ENCODE measurements at regions of chr11 and their contacts with region 1.

Region 1: DNA sequence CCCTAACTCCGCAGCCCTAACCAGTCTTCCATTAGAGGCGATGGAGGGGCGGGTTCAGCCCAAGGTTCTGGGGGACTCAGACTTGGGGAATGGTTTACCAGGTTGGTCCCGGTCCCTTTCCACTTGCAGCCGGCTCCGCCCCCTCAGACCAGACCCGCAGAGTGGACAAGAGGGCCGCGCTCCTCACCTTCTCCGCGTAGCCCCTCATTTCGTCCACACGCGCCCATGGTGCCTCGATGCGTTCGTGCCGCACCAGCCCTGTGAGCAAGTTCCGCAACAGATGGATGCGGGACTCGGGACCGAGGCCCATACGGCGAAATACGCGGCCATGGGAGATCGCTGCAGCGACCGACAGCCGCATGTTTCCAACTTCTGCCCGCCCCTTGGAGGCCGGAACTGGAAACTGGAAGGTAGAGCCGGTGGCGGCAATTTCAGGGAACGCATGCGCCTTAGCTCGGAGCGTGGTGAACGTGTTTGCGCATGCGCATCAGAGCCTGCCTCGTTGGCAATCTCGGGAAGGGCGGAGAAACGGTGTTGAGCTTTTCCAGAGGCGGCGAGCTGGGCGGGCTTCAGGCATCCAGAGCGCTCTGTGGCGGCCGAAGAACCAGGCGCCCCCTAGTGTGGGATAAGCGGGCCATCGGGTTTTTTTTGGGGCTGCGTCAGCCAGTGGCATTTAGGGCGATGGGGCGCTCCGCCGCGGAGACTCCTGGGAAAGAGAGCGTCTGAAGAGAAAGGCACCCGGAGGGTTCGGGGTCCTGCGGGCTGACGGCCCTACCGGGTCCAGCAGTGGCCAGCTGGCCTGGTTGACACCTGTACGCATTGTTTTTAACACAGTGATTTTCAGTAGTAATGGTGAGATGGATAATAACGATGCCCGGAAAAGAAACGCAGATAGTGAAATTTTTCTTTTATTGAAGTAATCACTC is at the start of gene MRPL17:
- DNase-seq: peak; percentile 92 to 100 (median 99)
- ATAC-seq: peak; percentile 96
- H3K4me3 Mint-ChIP-seq: peak within 1 kb of the TSS; percentile 96 to 100 (median 99)
- H3K27ac Mint-ChIP-seq: peak within 1 kb of the TSS; percentile 97 to 100 (median 99)
- H3K4me1 Mint-ChIP-seq: peaks cover 23 to 49% (median 37%) of the 10 kb centered on the region in 4 donors
- H3K27me3 Mint-ChIP-seq: peaks cover 0 to 2% (median 0%) of the 10 kb centered on the region in 5 donors
- polyA plus RNA-seq, gene MRPL17: 16.2 to 23.6 (median 16.5) TPM

Region 2: DNA sequence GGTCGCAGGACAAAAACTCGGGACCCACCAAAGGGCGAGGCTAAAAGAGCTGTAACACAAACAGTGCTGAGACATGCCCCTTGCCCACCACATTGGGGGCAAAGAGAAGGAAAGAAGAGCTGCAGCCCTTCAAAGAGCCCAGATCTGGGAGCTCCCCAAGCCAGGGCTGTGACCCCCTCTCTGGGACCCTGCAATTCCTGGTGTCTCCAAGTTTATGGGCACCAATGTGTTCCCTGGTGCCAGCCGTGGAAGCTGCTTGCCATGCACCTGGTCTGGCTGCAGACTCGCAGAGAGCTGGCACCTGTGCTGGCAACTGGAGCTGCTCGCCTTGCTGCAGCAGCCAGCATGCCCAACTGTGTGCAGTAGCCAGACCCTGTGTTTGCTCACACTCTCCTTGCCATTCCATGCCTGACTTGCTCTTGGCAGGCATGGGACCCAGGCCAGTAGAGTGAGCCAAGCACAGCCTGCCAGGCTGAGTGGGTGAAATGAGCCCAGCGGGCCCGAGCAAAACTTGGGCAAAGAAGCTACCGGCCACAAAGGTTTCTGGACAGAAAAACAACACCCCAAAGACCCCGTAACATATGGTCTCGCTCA is 95.7 kb before region 1 on chr11:
- POLR2A ChIA-PET with region 1: no interaction called
- DNase-seq: no peak
- ATAC-seq: no peak
- H3K4me3 Mint-ChIP-seq: no peak overlapping the region
- H3K27ac Mint-ChIP-seq: peak overlapping the region in 1 of 10 donors; percentile 43
- H3K4me1 Mint-ChIP-seq: peaks cover 0 to 5% (median 2%) of the 10 kb centered on the region in 4 donors
- H3K27me3 Mint-ChIP-seq: no peaks in the 10 kb centered on the region

Region 3: DNA sequence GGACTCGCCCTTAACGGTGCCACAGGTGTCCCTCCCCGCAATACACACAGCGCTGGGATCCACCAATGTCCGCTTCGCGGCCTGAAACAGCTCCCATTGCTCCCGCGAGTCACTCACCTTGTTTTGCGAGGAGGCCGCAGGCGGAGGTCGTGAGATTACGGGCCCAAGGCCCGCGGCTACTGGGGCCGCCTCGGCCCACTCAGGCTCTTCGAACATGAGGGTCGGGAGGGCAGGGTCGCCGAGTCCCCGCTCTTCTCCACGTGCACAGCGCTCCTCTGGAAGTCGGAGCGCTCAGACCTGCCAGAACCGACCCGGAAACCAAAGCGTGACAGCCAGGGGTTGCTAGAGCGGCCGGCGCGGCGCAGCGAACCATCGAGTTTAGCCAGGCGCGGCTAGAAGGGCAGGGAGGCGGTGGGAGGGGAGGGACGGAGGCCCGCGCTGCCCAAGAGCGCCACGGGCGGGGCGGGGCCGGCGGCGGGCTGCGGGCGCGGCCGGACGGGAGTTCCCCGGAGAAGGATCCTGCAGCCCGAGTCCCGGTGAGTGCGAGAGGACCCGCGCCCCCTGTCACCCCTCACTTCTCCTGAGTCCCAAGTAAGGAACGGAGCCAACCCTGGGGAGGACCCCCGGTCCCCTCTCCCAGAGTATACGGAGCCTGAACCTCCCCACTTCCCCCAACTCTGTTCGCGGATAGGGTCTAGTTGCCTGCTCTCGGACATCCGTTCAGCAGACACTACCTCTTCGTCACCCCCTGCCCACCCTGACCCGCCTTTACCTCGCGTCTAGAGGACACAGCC is 79.7 kb before region 1 on chr11 and contains the starts of genes ILK and RRP8:
- POLR2A ChIA-PET with region 1: interaction called, 108 read pairs
- DNase-seq: peak; percentile 68 to 92 (median 80)
- ATAC-seq: peak; percentile 80 to 85
- H3K4me3 Mint-ChIP-seq: no peak within 1 kb of the TSS
- H3K27ac Mint-ChIP-seq: no peak within 1 kb of the TSS
- H3K4me1 Mint-ChIP-seq: peaks cover 16 to 33% (median 29%) of the 10 kb centered on the region in 4 donors
- H3K27me3 Mint-ChIP-seq: no peaks in the 10 kb centered on the region
- polyA plus RNA-seq, gene ILK: 63.7 to 72.5 (median 68.5) TPM
- polyA plus RNA-seq, gene RRP8: 17.8 to 25.9 (median 20.9) TPM

Region 4: GRCh38 chr11:6646918-6647679 is 36.1 kb before region 1 on chr11:
- POLR2A ChIA-PET with region 1: interaction called, 15 read pairs
- DNase-seq: peak in 7 of 10 donors; percentile 18 to 45 (median 37)
- ATAC-seq: peak; percentile 73 to 78
- H3K4me3 Mint-ChIP-seq: no peak overlapping the region
- H3K27ac Mint-ChIP-seq: no peak overlapping the region
- H3K4me1 Mint-ChIP-seq: peaks cover 0 to 12% (median 0%) of the 10 kb centered on the region in 4 donors
- H3K27me3 Mint-ChIP-seq: no peaks in the 10 kb centered on the region

Region 5: DNA sequence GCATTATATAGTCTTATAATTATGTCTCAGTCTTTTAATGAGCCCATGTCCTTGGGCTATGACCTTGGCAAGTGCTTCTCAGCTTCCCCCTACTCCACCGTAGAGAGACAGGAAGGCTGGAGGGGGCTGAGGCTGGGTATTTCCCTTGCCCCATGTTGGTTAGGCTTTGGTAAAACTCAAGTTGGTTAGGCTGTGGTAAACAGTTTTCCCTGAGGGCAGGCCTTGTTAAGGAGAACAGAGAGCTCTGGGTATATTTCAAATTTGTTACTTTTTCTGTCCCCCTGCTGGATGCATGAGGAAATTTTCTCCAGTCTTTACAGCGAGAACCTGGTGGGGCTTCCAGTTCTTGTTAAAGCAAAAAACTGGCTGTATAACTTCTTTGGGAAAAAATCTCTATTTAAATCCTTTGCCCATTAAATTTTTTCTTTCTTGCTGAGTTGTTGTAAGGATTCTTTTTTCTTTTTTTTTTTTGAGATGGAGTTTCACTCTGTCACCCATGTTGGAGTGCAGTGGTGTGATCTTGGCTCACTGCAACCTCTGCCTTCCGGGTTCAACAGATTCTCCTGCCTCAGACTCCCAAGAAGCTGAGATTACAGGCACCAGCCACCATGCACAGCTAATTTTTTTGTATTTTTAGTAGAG is 15.3 kb before region 1 on chr11:
- POLR2A ChIA-PET with region 1: interaction called, 46 read pairs
- DNase-seq: peak in 6 of 10 donors; percentile 20 to 55 (median 39)
- ATAC-seq: peak; percentile 74 to 76
- H3K4me3 Mint-ChIP-seq: peak overlapping the region in 5 of 10 donors; percentile 19 to 54 (median 28)
- H3K27ac Mint-ChIP-seq: peak overlapping the region; percentile 6 to 93 (median 66)
- H3K4me1 Mint-ChIP-seq: peaks cover 42 to 70% (median 66%) of the 10 kb centered on the region in 4 donors
- H3K27me3 Mint-ChIP-seq: no peaks in the 10 kb centered on the region

Measured in naive thymus-derived CD8-positive, alpha-beta T cell (primary cell).